Naive thymus-derived CD8-positive, alpha-beta T cell (primary cell): ENCODE measurements at regions of chr11 and their contacts with region 1.

Region 1: DNA sequence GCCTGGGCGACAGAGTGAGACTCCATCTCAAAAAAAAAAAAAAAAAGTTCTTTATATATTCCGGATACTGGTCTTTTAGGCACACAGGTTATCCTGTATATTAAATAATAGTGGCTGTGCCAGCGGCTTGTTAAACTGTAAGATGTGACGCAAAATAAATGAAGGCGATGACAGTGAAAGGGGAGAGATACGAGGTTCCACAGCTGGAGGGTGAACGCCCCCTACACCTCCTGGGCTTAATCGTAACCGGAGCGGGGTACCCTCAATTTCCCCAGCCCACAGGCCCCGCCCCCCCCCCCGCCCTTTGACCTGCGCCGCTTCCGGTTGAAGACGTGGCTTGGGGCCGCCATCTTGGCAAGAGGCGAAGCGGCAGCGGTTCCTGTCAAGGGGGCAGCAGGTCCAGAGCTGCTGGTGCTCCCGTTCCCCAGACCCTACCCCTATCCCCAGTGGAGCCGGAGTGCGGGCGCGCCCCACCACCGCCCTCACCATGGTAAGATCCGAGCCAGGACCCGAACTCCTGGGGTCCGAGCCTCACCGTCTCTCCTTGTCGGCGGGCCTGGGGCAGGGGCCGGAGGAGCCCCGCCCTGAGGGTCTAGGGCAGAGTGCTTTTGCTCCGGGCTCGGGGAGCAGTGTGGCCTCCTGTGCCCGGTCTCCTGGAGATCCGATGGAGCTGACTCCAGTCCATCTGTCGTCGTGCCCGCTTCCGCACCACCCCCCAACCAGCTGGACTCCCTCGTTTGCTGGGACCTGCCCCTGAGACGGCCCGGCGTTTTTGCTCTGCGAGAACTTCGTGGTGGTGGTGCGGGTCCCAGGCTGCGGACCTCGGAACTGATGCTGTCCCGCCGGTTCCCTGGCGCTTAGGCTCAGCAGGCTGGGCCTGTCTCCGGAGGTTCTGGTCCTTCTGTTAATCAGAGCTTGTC is at the start of gene ARCN1:
- DNase-seq: peak; percentile 67 to 91 (median 76)
- ATAC-seq: peak; percentile 85 to 86
- H3K4me3 Mint-ChIP-seq: peak within 1 kb of the TSS; percentile 88 to 99 (median 96)
- H3K27ac Mint-ChIP-seq: peak within 1 kb of the TSS; percentile 93 to 99 (median 97)
- H3K4me1 Mint-ChIP-seq: peaks cover 20 to 54% (median 52%) of the 10 kb centered on the region in 4 donors
- H3K27me3 Mint-ChIP-seq: no peaks in the 10 kb centered on the region
- polyA plus RNA-seq, gene ARCN1: 121 to 138 (median 130) TPM

Region 2: GRCh38 chr11:118547132-118547531 is 25.2 kb before region 1 on chr11:
- POLR2A ChIA-PET with region 1: no interaction called
- DNase-seq: no peak
- ATAC-seq: no peak
- H3K4me3 Mint-ChIP-seq: no peak overlapping the region
- H3K27ac Mint-ChIP-seq: peak overlapping the region in 3 of 10 donors; percentile 44 to 66 (median 47)
- H3K4me1 Mint-ChIP-seq: no peaks in the 10 kb centered on the region
- H3K27me3 Mint-ChIP-seq: no peaks in the 10 kb centered on the region

Region 3: DNA sequence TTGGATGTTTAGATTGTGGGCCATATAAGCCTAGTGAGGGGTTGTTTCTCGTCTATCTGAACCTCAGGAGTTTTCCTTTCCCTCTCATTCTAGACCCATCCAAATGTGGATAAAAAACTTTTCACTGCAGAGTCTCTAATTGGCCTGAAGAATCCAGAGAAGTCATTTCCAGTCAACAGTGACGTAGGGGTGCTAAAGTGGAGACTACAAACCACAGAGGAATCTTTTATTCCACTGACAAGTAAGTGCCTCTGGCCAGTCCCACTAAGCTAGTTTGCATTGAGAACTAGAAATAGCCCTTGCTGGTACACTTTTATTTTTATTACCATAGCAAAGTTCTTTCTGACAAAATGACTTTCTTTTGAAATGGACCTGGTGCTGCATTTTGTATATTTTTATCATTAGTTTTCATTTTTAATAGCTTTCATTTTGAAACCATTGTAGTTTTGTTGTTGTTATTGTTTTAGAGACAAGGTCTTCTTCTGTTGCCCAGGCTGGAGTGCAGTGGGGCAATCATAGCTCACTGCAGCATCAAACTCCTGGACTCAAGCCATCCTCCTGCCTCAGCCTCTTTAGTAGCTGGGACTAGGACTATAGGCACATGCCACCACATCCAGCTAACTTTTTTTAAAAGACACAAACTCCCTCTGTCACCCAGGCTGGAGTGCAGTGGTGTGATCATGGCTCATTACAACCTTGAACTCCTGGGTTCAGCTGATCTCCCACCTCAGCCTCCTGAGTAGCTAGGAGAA is 20.5 kb after region 1 on chr11:
- POLR2A ChIA-PET with region 1: no interaction called
- DNase-seq: no peak
- ATAC-seq: no peak
- H3K4me3 Mint-ChIP-seq: no peak overlapping the region
- H3K27ac Mint-ChIP-seq: peak overlapping the region in 2 of 10 donors; percentile 3 to 19
- H3K4me1 Mint-ChIP-seq: peaks cover 4 to 17% (median 11%) of the 10 kb centered on the region in 4 donors
- H3K27me3 Mint-ChIP-seq: no peaks in the 10 kb centered on the region

Region 4: DNA sequence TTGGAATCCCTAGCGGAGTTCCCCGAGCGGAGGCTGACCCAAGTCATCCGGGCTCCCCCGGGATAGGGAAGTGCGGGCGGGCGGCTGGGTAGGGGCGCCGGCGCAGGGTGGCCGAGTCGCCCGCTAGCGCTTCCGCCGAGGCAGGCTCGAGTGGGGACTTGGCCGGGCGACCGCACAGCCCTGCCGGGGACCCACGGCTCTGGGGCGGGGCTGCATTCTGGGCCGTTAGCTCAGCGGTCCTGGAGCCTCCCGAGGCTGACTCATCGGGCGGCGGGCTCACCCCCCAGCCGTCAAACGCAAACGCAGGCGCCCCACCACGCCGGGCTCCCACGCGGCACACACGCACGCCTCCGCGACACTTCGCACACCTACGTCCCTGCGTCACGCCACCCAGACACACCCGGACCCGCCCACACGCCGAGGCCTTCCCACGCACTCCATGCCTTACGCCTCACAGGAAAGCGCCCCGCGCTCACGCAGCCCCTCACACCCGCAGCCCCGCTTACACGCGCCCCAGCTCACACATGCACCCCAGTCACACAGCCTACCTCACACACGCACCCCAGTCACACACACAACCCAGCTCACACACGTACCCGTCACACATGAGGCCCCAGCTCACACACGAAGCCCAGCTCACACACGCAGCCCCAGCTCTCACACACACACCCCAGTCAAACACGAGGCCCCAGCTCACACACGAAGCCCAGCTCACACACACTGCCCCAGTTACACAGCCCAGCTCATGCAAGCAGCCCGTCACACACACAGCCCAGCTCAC is 36.2 kb after region 1 on chr11:
- POLR2A ChIA-PET with region 1: interaction called, 12 read pairs
- DNase-seq: peak; percentile 74 to 95 (median 88)
- ATAC-seq: peak; percentile 71 to 78
- H3K4me3 Mint-ChIP-seq: peak overlapping the region; percentile 74 to 92 (median 86)
- H3K27ac Mint-ChIP-seq: peak overlapping the region; percentile 70 to 95 (median 92)
- H3K4me1 Mint-ChIP-seq: peaks cover 21 to 35% (median 26%) of the 10 kb centered on the region in 4 donors
- H3K27me3 Mint-ChIP-seq: peaks cover 0 to 15% (median 1%) of the 10 kb centered on the region in 5 donors